Activated CD4-positive, alpha-beta T cell treated with anti-CD3 and anti-CD28 coated beads, Interleukin-2, amount 10 ng/mL, durations not matched to agents 24 days and 14 days (primary cell): ENCODE measurements at regions of chr3 and their contacts with region 1.

Region 1: GRCh38 chr3:50365080-50365841 is 5.9 kb upstream of the TMEM115 start:
- DNase-seq: peak; percentile 98
- H3K4me3 Mint-ChIP-seq: peak overlapping the region; percentile 83
- H3K27ac Mint-ChIP-seq: peak overlapping the region; percentile 62
- H3K4me1 Mint-ChIP-seq: peaks cover 11% of the 10 kb centered on the region
- H3K27me3 Mint-ChIP-seq: no peaks in the 10 kb centered on the region

Region 2: GRCh38 chr3:50350527-50351322 is 14.5 kb before region 1 on chr3 and contains the starts of genes CYB561D2 and NPRL2:
- intact Hi-C with region 1: loop called (anchors 2 kb)
- DNase-seq: peak; percentile 100
- H3K4me3 Mint-ChIP-seq: peak within 1 kb of the TSS; percentile 95
- H3K27ac Mint-ChIP-seq: peak within 1 kb of the TSS; percentile 97
- H3K4me1 Mint-ChIP-seq: peaks cover 40% of the 10 kb centered on the region
- H3K27me3 Mint-ChIP-seq: no peaks in the 10 kb centered on the region
- total RNA-seq, gene CYB561D2: 23.9 and 27.0 TPM in 2 replicates
- total RNA-seq, gene NPRL2: 38.1 and 43.0 TPM in 2 replicates

Region 3: DNA sequence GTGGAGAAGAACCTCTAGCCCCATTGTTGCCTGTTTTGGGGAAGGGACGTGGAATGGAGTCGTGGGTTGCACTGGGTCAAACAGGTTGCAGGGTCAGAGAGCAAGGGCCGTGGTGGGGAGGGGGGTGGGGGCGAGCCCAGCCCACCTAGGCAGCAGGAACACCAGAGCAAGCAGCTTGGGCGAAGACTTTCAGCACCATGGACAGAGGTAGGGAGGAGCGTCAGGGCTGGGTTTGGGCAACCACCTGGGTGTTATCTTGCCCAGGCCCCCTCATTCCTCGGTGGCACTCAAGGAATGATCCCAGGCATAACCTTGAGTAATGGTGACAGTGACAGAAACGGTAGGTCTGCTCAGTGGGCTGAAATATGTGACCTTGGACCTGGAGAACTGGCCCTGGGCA is 40.0 kb after region 1 on chr3:
- intact Hi-C with region 1: no loop called
- DNase-seq: peak; percentile 86
- H3K4me3 Mint-ChIP-seq: no peak overlapping the region
- H3K27ac Mint-ChIP-seq: no peak overlapping the region
- H3K4me1 Mint-ChIP-seq: no peaks in the 10 kb centered on the region
- H3K27me3 Mint-ChIP-seq: no peaks in the 10 kb centered on the region

Region 4: GRCh38 chr3:50427984-50428633 is 62.8 kb after region 1 on chr3:
- intact Hi-C with region 1: no loop called
- DNase-seq: no peak
- H3K4me3 Mint-ChIP-seq: no peak overlapping the region
- H3K27ac Mint-ChIP-seq: no peak overlapping the region
- H3K4me1 Mint-ChIP-seq: no peaks in the 10 kb centered on the region
- H3K27me3 Mint-ChIP-seq: no peaks in the 10 kb centered on the region